Colonic mucosa (tissue), 4 donors: ENCODE measurements at regions of chr3 and their contacts with region 1.

Region 1: DNA sequence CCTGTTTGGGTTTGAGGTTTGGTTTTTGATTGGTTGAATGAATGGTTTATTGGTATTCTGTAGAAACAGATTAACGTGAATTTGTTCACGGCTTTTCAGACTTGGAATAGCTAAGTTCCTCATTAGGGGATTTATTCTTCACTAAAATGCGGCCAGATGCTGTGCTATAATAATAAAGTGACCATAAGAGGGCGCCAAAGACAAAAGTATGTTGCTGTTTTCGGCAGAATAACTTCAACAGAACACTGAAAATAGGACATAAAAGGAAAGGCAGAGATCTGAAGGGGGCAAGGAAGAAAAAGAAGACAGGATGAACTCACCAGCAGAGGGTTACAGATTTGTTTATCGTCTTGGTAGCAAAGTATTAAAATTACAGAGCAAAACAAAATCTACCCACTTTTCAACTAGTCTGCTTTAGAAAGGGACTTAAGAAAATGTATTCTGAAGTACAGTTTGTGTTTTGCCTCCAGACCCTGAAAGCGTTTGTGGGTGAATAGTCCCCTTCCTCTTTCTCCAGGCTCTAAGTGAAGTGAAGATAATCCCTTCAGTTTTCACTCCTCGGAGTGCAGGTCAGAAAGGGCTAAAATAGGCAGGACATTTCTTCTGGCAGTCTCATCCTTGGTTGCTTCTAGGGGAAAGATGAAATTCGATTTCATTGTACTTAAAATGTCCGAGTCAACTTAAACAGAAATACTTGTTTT is 147.6 kb downstream of the IL20RB start:
- DNase-seq: no peak
- H3K4me3 ChIP-seq: no peak overlapping the region
- H3K27ac ChIP-seq: no peak overlapping the region
- H3K4me1 ChIP-seq: no peaks in the 10 kb centered on the region
- H3K27me3 ChIP-seq: no peaks in the 10 kb centered on the region
- CTCF ChIP-seq: peak; percentile 52

Region 2: GRCh38 chr3:136332776-136333175 is 772.7 kb before region 1 on chr3:
- intact Hi-C with region 1: no loop called
- DNase-seq: no peak
- H3K4me3 ChIP-seq: no peak overlapping the region
- H3K27ac ChIP-seq: no peak overlapping the region
- H3K4me1 ChIP-seq: no peaks in the 10 kb centered on the region
- H3K27me3 ChIP-seq: no peaks in the 10 kb centered on the region
- CTCF ChIP-seq: no peak

Region 3: DNA sequence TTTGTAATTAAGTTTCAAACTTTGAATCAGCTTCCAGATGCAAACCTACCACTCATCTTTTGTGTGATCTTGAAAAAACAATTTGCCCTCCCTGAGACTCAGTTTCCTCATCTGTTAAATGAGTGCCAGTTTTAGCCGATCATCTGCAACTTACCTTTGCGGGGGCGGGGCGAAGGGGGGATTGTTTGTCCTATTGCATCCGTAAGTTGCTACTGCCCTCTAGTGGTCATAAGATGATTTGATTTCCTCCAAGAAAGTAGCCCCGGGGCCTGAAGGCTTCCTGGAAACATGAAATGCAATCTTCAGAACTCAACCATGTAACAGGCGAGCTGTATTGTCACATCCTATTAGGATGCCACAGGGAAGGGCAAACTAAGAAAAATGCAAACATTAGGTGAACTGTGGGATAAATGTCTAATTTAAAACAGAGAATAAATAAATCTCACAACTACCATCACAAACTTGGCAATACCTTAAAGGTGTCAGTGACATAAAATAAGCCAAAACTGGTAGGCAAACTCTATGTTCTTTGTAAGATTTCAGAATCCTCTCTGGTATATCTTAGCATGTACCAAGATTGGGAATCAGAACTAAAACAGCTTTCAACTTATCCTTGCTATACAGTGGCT is 841.0 kb after region 1 on chr3:
- intact Hi-C with region 1: loop called (anchors 5 kb)
- DNase-seq: peak; percentile 38
- H3K4me3 ChIP-seq: no peak overlapping the region
- H3K27ac ChIP-seq: no peak overlapping the region
- H3K4me1 ChIP-seq: no peaks in the 10 kb centered on the region
- H3K27me3 ChIP-seq: no peaks in the 10 kb centered on the region
- CTCF ChIP-seq: peak; percentile 41

Region 4: DNA sequence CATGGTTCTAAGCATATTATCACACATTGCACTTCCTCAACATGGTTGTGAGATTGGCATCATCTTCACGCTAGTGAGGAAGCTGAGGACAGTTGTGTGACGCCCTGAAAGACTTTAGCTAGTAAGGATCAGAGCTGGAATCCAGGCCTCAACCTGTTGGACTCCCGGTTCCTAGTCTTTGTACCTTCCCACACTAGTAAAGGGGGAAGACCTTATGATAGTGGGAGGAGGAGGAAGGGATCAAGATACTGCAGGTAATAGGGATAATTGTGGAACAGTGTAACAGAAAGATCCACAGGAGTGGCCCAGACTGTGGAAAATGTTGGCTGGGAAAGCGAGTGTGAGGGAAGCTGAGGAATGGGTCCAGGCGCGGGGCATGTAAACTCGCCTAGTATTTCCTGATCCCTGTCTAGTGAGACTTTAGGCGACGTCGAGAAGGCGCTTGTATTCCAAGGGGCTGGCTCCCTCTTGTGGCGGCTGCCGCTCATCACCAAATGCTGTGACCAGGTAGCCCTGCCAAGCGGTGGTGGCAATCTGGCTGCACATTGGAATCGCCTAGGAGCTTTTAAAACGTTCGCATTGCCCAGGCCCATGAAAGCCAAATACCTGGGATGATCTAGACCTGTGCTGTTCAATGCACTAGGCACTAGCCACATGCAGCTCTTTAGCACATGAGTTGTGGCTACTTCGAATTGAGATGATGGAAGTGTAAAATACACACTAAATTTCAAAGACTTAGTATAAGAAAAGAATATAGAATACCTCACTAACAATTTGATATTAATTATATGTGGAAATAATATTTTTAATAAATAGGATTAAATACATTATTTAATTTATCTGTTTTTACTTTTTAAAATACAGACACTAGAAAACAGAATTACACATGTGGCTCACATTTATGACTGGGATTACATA is 865.7 kb after region 1 on chr3:
- intact Hi-C with region 1: loop called (anchors 10 kb)
- DNase-seq: peak; percentile 78
- H3K4me3 ChIP-seq: no peak overlapping the region
- H3K27ac ChIP-seq: no peak overlapping the region
- H3K4me1 ChIP-seq: no peaks in the 10 kb centered on the region
- H3K27me3 ChIP-seq: no peaks in the 10 kb centered on the region
- CTCF ChIP-seq: peak; percentile 69

Region 5: GRCh38 chr3:138051946-138052802 is 946.7 kb after region 1 on chr3:
- intact Hi-C with region 1: loop called (anchors 10 kb)
- DNase-seq: peak; percentile 30
- H3K4me3 ChIP-seq: no peak overlapping the region
- H3K27ac ChIP-seq: no peak overlapping the region
- H3K4me1 ChIP-seq: no peaks in the 10 kb centered on the region
- H3K27me3 ChIP-seq: no peaks in the 10 kb centered on the region
- CTCF ChIP-seq: peak; percentile 27